ENCODE measurements at regions of chr2 and their contacts with region 1.

Region 1: DNA sequence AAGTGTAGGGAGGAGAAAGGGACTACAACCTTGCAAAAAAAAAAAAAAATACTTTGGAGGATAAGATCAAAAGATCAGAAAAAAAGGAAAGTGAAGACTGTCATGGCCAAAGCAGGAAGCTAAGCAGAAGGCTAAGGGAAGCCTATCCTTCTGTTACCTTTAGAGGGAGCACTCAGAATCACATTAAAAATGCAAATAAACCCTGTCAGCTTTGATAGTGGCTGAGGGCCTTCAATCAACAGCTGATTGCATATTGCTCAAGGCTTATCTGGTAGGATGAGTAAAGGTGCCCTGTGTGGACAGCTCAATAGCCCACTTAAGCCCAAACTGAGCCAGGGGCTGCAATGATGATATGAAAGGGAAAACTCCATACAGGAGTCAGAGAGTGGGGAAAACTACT is 1021.2 kb downstream of the LRP1B start:
- DNase-seq: peak in 1 of 2 experiments; percentile 2
- H3K4me3 ChIP-seq: no peak overlapping the region
- H3K4me3 Mint-ChIP-seq: no peak overlapping the region
- H3K27ac Mint-ChIP-seq: no peak overlapping the region
- H3K4me1 ChIP-seq: peaks cover 6% of the 10 kb centered on the region; the same call in 1 of the 2 replicates
- H3K4me1 Mint-ChIP-seq: no peaks in the 10 kb centered on the region
- H3K27me3 ChIP-seq: no peaks in the 10 kb centered on the region
- H3K27me3 Mint-ChIP-seq: no peaks in the 10 kb centered on the region
- CTCF ChIP-seq: no peak

Region 2: DNA sequence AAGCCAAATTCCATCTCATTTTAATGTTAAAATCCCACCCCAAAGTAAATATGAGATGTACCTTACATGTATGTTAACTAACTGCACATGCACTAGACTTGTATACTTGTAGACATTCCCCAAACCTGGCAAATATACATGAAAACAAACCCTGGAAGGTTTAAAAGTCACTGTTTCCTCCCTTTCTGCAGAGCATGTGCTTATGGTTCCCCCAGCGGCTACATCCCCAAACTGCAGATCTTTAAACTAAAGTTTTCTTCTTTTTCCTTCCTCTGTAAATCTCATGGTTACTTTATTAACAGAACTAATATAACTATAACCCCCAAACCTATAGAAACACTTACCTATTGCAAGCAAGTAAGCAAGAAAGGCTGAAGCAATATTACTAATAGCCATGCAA is 289.6 kb after region 1 on chr2:
- CTCF ChIA-PET with region 1: no interaction called
- POLR2A ChIA-PET with region 1: no interaction called
- intact Hi-C with region 1: loop called (anchors 10 kb)
- DNase-seq: peak in 1 of 2 experiments; percentile 5
- H3K4me3 ChIP-seq: no peak overlapping the region
- H3K4me3 Mint-ChIP-seq: no peak overlapping the region
- H3K27ac Mint-ChIP-seq: no peak overlapping the region
- H3K4me1 ChIP-seq: no peaks in the 10 kb centered on the region
- H3K4me1 Mint-ChIP-seq: no peaks in the 10 kb centered on the region
- H3K27me3 ChIP-seq: no peaks in the 10 kb centered on the region
- H3K27me3 Mint-ChIP-seq: no peaks in the 10 kb centered on the region
- CTCF ChIP-seq: peak in 1 of 2 experiments; percentile 58